ENCODE measurements at regions of chr17 and their contacts with region 1.

Region 1: GRCh38 chr17:37770631-37771518 is 26.0 kb upstream of the HNF1B start:
- DNase-seq: peak in 4 of 9 donors; percentile 5 to 11 (median 9)
- ATAC-seq: peak; percentile 34
- H3K4me3 ChIP-seq: no peak overlapping the region
- H3K4me3 Mint-ChIP-seq: peak overlapping the region in 1 of 10 donors; percentile 14
- H3K27ac ChIP-seq: no peak overlapping the region
- H3K27ac Mint-ChIP-seq: peak overlapping the region in 1 of 9 donors; percentile 9
- H3K4me1 ChIP-seq: peaks cover 0 to 5% of the 10 kb centered on the region in 2 donors
- H3K4me1 Mint-ChIP-seq: peaks cover 0 to 49% (median 3%) of the 10 kb centered on the region in 7 donors
- H3K27me3 ChIP-seq: no peaks in the 10 kb centered on the region
- H3K27me3 Mint-ChIP-seq: peaks cover 14 to 26% (median 18%) of the 10 kb centered on the region in 5 donors

Region 2: DNA sequence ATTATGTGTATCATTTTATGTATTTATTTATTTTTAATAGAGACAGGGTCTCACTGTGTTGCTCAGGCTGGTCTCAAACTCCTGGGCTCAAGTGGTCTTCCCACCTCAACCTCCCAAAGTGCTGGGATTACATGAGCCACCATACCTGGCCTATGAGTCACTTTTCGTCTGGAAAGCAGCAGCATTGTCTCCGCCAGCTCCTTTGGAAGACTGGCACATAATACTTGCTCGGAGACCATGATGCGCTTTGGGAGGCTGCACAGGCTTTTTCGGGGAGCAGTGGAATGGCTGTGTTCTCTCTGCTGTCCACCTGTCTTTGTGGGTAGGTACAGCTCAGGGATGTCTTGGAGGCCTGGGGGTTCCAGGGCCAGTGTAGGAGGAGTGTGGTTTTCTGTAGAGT is 720.0 kb before region 1 on chr17:
- CTCF ChIA-PET with region 1: no interaction called
- POLR2A ChIA-PET with region 1: no interaction called
- intact Hi-C with region 1: no loop called
- DNase-seq: no peak
- ATAC-seq: no peak
- H3K4me3 ChIP-seq: no peak overlapping the region
- H3K4me3 Mint-ChIP-seq: no peak overlapping the region
- H3K27ac ChIP-seq: no peak overlapping the region
- H3K27ac Mint-ChIP-seq: peak overlapping the region in 1 of 9 donors; percentile 26
- H3K4me1 ChIP-seq: no peaks in the 10 kb centered on the region
- H3K4me1 Mint-ChIP-seq: peaks cover 6 to 9% (median 7%) of the 10 kb centered on the region in 7 donors
- H3K27me3 ChIP-seq: no peaks in the 10 kb centered on the region
- H3K27me3 Mint-ChIP-seq: no peaks in the 10 kb centered on the region

Region 3: GRCh38 chr17:37737081-37737480 is 33.8 kb before region 1 on chr17:
- CTCF ChIA-PET with region 1: no interaction called
- POLR2A ChIA-PET with region 1: interaction called, 5 read pairs
- intact Hi-C with region 1: loop called in 1 of 2 experiments (anchors 5 kb)
- DNase-seq: no peak
- ATAC-seq: no peak
- H3K4me3 ChIP-seq: no peak overlapping the region
- H3K4me3 Mint-ChIP-seq: no peak overlapping the region
- H3K27ac ChIP-seq: no peak overlapping the region
- H3K27ac Mint-ChIP-seq: no peak overlapping the region
- H3K4me1 ChIP-seq: peaks cover 4 to 7% of the 10 kb centered on the region in 2 donors
- H3K4me1 Mint-ChIP-seq: peaks cover 0 to 9% (median 2%) of the 10 kb centered on the region in 7 donors
- H3K27me3 ChIP-seq: peaks cover 16 to 18% of the 10 kb centered on the region in 2 donors
- H3K27me3 Mint-ChIP-seq: peaks cover 44 to 58% (median 53%) of the 10 kb centered on the region in 5 donors

Region 4: DNA sequence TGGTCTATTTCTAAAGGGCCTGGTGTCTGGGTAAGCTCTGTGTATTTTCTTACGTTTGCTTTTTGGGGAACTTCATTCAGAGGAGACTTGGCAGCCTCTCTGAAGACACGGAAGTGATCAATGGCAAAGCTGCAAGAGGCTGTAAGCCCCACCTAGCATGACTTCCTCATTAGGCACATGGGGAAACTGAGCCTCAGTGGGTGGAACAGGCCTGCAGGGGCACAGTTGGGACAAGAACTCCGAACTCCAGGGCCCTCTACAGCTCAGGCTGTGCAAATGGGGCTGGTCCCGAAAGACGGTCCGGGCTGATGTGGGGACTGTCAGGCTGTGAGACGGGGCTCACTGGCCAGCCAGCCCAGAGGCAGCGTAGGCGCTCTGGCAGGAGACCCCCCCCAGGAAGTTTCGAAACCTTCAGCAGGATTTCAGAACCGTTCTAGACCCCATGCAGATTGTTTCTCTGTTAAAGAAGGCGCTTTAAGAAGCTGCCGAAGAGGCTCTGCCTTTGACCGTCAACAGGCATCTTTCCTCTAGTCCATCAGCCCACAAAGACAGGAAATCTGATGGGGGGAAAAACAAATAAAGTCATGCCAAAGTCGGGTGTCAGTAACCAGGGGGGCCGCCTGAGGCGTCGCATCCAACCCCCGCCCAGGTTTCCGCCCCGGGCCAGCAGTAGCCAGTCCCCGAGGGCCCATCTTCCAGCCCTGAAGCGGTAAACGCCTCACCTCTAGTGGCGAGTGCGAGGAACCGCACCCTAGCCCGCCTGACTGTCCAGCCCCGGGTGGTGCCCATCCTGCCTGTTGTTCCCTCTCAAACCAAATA is 73.5 kb after region 1 on chr17:
- CTCF ChIA-PET with region 1: no interaction called
- POLR2A ChIA-PET with region 1: no interaction called
- intact Hi-C with region 1: loop called in 1 of 2 experiments (anchors 10 kb)
- DNase-seq: peak in 8 of 9 donors; percentile 16 to 69 (median 36)
- ATAC-seq: peak; percentile 88
- H3K4me3 ChIP-seq: peak overlapping the region; percentile 29
- H3K4me3 Mint-ChIP-seq: peak overlapping the region; percentile 19 to 87 (median 77)
- H3K27ac ChIP-seq: no peak overlapping the region
- H3K27ac Mint-ChIP-seq: peak overlapping the region in 4 of 9 donors; percentile 13 to 76 (median 30)
- H3K4me1 ChIP-seq: no peaks in the 10 kb centered on the region
- H3K4me1 Mint-ChIP-seq: peaks cover 0 to 33% (median 12%) of the 10 kb centered on the region in 7 donors
- H3K27me3 ChIP-seq: no peaks in the 10 kb centered on the region
- H3K27me3 Mint-ChIP-seq: peaks cover 0 to 21% (median 7%) of the 10 kb centered on the region in 5 donors

Region 5: GRCh38 chr17:38415250-38416194 is 644.6 kb after region 1 on chr17:
- CTCF ChIA-PET with region 1: no interaction called
- POLR2A ChIA-PET with region 1: no interaction called
- intact Hi-C with region 1: no loop called
- DNase-seq: no peak
- ATAC-seq: no peak
- H3K4me3 ChIP-seq: no peak overlapping the region
- H3K4me3 Mint-ChIP-seq: peak overlapping the region in 1 of 10 donors; percentile 14
- H3K27ac ChIP-seq: no peak overlapping the region
- H3K27ac Mint-ChIP-seq: peak overlapping the region in 1 of 9 donors; percentile 71
- H3K4me1 ChIP-seq: no peaks in the 10 kb centered on the region
- H3K4me1 Mint-ChIP-seq: peaks cover 0 to 15% (median 3%) of the 10 kb centered on the region in 7 donors
- H3K27me3 ChIP-seq: peaks cover 2% of the 10 kb centered on the region in 2 donors
- H3K27me3 Mint-ChIP-seq: peaks cover 9 to 42% (median 37%) of the 10 kb centered on the region in 5 donors